Dorsolateral prefrontal cortex (tissue), 120 donors: ENCODE measurements at regions of chr4 and their contacts with region 1.

Region 1: GRCh38 chr4:42282081-42282901 is 115.0 kb upstream of the SHISA3 start:
- DNase-seq: peak in 6 of 10 donors; percentile 35 to 67 (median 58)
- H3K4me3 ChIP-seq: peak overlapping the region in 31 of 59 donors; percentile 1 to 51 (median 27)
- H3K27ac ChIP-seq: no peak overlapping the region
- H3K27me3 ChIP-seq: no peaks in the 10 kb centered on the region
- CTCF ChIP-seq: peak; percentile 70 to 96 (median 88)

Region 2: DNA sequence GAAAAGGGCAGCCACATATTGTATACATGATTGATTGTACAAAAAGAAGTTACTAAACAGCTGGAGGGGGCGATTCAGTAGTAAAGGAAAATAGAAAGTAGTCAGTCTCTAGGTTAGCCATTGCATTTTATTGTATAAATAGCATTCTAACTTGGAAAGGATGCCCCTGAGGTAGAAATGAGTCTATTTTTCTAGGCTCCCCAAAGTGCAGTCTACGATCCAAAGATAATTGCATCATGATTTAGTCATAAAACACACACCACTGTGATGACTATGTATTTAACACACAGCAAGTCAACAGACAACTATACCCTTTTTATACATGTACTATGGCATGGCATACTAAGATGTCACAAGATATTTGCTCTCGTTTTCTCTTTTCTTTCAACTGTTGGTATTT is 1272.9 kb before region 1 on chr4:
- intact Hi-C with region 1: no loop called
- DNase-seq: no peak
- H3K4me3 ChIP-seq: no peak overlapping the region
- H3K27ac ChIP-seq: peak overlapping the region in 3 of 59 donors; percentile 25 to 33 (median 25)
- H3K27me3 ChIP-seq: no peaks in the 10 kb centered on the region
- CTCF ChIP-seq: no peak

Region 3: GRCh38 chr4:42302348-42302747 is 20.1 kb after region 1 on chr4:
- intact Hi-C with region 1: loop called in 1 of 2 experiments (anchors 2 kb)
- DNase-seq: peak in 8 of 10 donors; percentile 27 to 70 (median 54)
- H3K4me3 ChIP-seq: no peak overlapping the region
- H3K27ac ChIP-seq: no peak overlapping the region
- H3K27me3 ChIP-seq: peaks cover 0 to 4% (median 0%) of the 10 kb centered on the region in 45 donors
- CTCF ChIP-seq: peak in 51 of 56 donors; percentile 25 to 68 (median 50)

Region 4: DNA sequence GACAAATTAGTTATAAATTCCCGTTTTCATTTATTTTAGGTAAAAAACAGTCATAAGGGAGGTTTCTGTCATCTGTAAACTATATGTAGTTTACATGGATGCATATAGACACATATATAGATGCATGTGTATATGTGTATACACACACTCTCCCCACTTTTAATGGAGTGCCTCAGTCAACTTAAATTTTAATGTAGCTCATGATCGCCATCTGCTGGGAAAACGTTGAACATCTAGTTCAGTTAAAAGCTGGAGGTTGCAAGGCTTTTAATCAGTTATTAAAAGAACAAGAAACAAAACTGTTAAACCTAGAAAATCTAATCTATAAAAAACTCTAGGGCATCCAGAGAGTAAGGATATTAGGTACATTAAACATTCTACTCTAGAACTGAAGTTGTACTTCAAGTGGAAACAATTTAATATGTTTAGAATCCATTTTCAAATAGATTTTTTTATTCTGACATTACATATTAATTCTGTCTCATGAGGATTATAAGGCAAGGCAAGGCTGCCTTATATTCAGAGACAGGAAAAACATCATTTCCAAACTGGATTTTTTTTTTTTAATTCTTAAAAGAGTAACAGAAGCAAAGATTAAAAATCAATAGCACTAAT is 237.6 kb after region 1 on chr4:
- intact Hi-C with region 1: loop called (anchors 5 to 10 kb)
- DNase-seq: peak in 2 of 10 donors; percentile 37 to 43
- H3K4me3 ChIP-seq: no peak overlapping the region
- H3K27ac ChIP-seq: peak overlapping the region in 3 of 59 donors; percentile 7 to 17 (median 11)
- H3K27me3 ChIP-seq: no peaks in the 10 kb centered on the region
- CTCF ChIP-seq: peak; percentile 56 to 91 (median 78)

Region 5: DNA sequence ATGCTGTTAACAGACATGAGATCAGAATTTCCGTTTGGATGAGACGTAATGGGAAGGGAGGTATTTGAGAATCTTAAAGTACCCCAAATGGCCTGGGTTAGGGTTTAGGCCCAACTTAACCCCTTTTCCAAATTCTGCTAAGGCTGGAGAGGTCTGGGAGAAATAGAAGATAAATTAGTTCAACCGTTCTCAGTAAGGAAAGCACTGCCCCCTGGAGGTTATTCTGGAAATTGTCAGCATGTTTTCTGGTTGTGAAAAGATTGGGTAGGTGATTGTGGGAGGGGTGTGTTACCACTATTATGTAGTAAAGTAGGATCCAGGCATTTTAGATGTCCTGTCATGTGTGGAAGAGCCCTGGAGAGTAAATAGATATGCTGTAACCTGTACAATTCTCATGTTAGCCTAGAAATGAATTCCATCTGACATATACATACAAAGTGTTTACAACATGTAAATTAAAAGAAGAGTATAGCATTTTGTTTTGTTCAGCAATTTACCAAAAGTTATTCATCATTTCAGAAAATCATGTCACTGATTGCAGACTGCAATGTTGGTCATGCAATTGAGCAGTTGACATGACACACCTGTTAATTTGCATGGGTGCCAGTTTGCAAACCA is 583.4 kb after region 1 on chr4:
- intact Hi-C with region 1: loop called in 1 of 2 experiments (anchors 10 kb)
- DNase-seq: peak in 4 of 10 donors; percentile 21 to 75 (median 40)
- H3K4me3 ChIP-seq: no peak overlapping the region
- H3K27ac ChIP-seq: no peak overlapping the region
- H3K27me3 ChIP-seq: no peaks in the 10 kb centered on the region
- CTCF ChIP-seq: peak; percentile 60 to 94 (median 82)